Naive thymus-derived CD4-positive, alpha-beta T cell (primary cell): ENCODE measurements at regions of chr4 and their contacts with region 1.

Region 1: GRCh38 chr4:142435599-142436235 is 410.4 kb downstream of the INPP4B start:
- DNase-seq: no peak
- ATAC-seq: no peak
- H3K4me3 ChIP-seq: no peak overlapping the region
- H3K4me3 Mint-ChIP-seq: no peak overlapping the region
- H3K27ac ChIP-seq: no peak overlapping the region
- H3K27ac Mint-ChIP-seq: peak overlapping the region in 2 of 9 donors; percentile 21 to 49
- H3K4me1 ChIP-seq: peaks cover 4 to 8% of the 10 kb centered on the region in 2 donors
- H3K4me1 Mint-ChIP-seq: peaks cover 8 to 43% (median 31%) of the 10 kb centered on the region in 7 donors
- H3K27me3 ChIP-seq: no peaks in the 10 kb centered on the region
- H3K27me3 Mint-ChIP-seq: no peaks in the 10 kb centered on the region

Region 2: GRCh38 chr4:142160509-142160908 is 275.2 kb before region 1 on chr4:
- CTCF ChIA-PET with region 1: no interaction called
- POLR2A ChIA-PET with region 1: no interaction called
- intact Hi-C with region 1: no loop called
- DNase-seq: no peak
- ATAC-seq: no peak
- H3K4me3 ChIP-seq: no peak overlapping the region
- H3K4me3 Mint-ChIP-seq: no peak overlapping the region
- H3K27ac ChIP-seq: no peak overlapping the region
- H3K27ac Mint-ChIP-seq: peak overlapping the region in 5 of 9 donors; percentile 43 to 65 (median 56)
- H3K4me1 ChIP-seq: no peaks in the 10 kb centered on the region
- H3K4me1 Mint-ChIP-seq: peaks cover 2 to 46% (median 21%) of the 10 kb centered on the region in 7 donors
- H3K27me3 ChIP-seq: no peaks in the 10 kb centered on the region
- H3K27me3 Mint-ChIP-seq: no peaks in the 10 kb centered on the region

Region 3: DNA sequence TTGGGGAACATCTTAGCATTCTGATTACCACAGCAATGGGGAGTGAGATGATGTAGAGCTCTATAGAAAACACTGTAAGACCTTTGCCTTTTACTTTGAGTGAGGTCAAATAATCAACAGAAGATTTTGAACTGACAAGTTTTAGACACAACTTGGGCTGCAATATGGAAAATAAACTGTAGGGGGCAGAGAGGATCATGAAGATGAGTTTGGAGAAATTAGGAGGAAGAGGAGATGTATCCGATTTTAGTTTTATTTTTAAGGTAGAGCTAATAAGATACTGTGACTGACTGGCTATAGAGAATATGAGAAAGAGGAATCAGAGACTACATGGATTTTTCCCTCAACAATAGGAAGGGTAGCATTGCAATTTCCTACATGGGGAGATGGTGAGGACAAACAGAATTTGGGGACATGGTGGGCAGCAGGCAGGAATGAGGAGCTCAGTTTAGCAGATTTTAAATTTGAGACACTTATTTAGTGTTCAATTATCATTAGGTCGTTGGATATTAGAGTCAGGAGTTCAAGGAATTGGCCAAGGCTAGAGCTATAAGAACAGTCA is 152.8 kb before region 1 on chr4:
- CTCF ChIA-PET with region 1: interaction called, 4 read pairs
- POLR2A ChIA-PET with region 1: no interaction called
- intact Hi-C with region 1: loop called in 1 of 2 experiments (anchors 2 kb)
- DNase-seq: peak in 7 of 9 donors; percentile 26 to 53 (median 38)
- ATAC-seq: peak; percentile 64
- H3K4me3 ChIP-seq: no peak overlapping the region
- H3K4me3 Mint-ChIP-seq: no peak overlapping the region
- H3K27ac ChIP-seq: no peak overlapping the region
- H3K27ac Mint-ChIP-seq: no peak overlapping the region
- H3K4me1 ChIP-seq: peaks cover 7 to 15% of the 10 kb centered on the region in 2 donors
- H3K4me1 Mint-ChIP-seq: peaks cover 9 to 35% (median 25%) of the 10 kb centered on the region in 7 donors
- H3K27me3 ChIP-seq: no peaks in the 10 kb centered on the region
- H3K27me3 Mint-ChIP-seq: no peaks in the 10 kb centered on the region

Region 4: DNA sequence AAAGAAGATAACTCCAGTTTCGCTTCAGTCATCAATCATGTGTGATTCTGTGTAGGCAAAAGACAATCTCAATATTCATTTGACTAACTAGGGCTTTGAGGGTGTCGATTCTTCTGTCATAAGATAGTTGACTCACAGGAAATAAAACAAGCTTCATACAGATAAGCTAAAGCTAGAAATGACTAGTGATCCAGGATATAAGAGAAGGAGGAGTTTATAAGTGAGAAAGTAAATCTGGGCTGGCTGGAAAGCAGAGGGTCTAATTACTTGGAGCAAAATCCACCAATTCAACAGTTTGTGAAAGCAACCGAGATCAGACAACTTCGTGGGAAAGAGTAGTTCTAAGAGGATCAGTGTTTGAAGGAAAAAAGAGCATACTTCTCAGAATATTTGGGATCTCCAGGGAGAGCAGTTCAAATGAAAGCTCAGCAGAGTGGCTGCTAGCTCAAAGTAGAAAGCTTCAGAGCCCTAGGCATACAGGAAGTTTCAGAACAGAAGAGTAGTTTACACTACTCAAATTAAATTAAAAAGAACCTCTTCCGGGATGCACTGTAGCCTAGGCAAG is 18.9 kb before region 1 on chr4:
- CTCF ChIA-PET with region 1: no interaction called
- POLR2A ChIA-PET with region 1: no interaction called
- intact Hi-C with region 1: loop called in 1 of 2 experiments (anchors 1 kb)
- DNase-seq: peak in 7 of 9 donors; percentile 18 to 64 (median 55)
- ATAC-seq: peak; percentile 90
- H3K4me3 ChIP-seq: peak overlapping the region; percentile 50
- H3K4me3 Mint-ChIP-seq: peak overlapping the region; percentile 22 to 90 (median 79)
- H3K27ac ChIP-seq: peak overlapping the region; percentile 64
- H3K27ac Mint-ChIP-seq: peak overlapping the region; percentile 77 to 98 (median 94)
- H3K4me1 ChIP-seq: peaks cover 25 to 37% of the 10 kb centered on the region in 2 donors
- H3K4me1 Mint-ChIP-seq: peaks cover 21 to 75% (median 60%) of the 10 kb centered on the region in 7 donors
- H3K27me3 ChIP-seq: no peaks in the 10 kb centered on the region
- H3K27me3 Mint-ChIP-seq: no peaks in the 10 kb centered on the region

Region 5: DNA sequence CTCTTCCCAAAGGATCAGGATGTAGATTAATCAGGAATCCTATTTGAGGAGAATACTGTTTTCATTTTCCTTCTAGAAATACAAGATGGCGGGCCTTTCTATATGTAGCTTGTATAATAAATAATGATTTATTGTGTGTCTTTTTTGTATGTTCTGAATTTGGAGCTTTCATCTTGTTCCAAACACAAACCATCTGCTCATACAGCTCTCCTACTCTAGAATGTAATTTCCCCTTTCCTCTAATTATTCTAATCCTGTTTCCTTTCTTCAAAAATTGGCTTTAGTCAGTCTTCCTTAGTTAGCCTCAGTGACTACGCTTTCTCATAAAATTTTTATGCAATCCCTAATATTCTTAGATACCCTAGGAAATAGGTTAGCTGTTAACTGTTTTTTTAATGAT is 11.9 kb before region 1 on chr4:
- CTCF ChIA-PET with region 1: no interaction called
- POLR2A ChIA-PET with region 1: no interaction called
- intact Hi-C with region 1: loop called in 1 of 2 experiments (anchors 1 kb)
- DNase-seq: no peak
- ATAC-seq: no peak
- H3K4me3 ChIP-seq: no peak overlapping the region
- H3K4me3 Mint-ChIP-seq: no peak overlapping the region
- H3K27ac ChIP-seq: no peak overlapping the region
- H3K27ac Mint-ChIP-seq: no peak overlapping the region
- H3K4me1 ChIP-seq: no peaks in the 10 kb centered on the region
- H3K4me1 Mint-ChIP-seq: peaks cover 3 to 20% (median 8%) of the 10 kb centered on the region in 7 donors
- H3K27me3 ChIP-seq: no peaks in the 10 kb centered on the region
- H3K27me3 Mint-ChIP-seq: no peaks in the 10 kb centered on the region

Region 6: DNA sequence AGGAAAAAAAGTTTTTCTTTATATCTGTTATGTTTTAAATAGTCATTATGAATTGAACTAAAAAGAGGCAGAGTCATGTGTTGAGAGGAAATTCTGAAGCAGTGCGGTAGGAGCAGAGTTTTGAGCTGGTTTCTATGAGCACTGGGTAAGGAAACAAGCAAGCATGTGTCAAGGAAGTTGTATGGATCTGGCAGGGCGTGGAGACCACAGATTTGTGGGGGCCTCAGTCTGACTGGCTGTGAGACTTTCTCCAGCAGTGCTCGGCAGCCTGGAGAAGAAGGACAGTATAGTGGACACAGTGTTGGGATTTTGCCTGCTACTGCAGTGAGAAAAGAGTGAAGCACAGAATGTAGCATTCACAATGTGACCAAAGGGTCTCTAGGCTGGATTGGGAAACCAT is 11.3 kb after region 1 on chr4:
- CTCF ChIA-PET with region 1: no interaction called
- POLR2A ChIA-PET with region 1: interaction called, 4 read pairs
- intact Hi-C with region 1: loop called in 1 of 2 experiments (anchors 2 kb)
- DNase-seq: peak in 1 of 9 donors; percentile 2
- ATAC-seq: peak; percentile 20
- H3K4me3 ChIP-seq: no peak overlapping the region
- H3K4me3 Mint-ChIP-seq: peak overlapping the region in 8 of 10 donors; percentile 16 to 78 (median 70)
- H3K27ac ChIP-seq: no peak overlapping the region
- H3K27ac Mint-ChIP-seq: peak overlapping the region in 7 of 9 donors; percentile 32 to 71 (median 56)
- H3K4me1 ChIP-seq: peaks cover 0 to 14% of the 10 kb centered on the region in 2 donors
- H3K4me1 Mint-ChIP-seq: peaks cover 10 to 50% (median 42%) of the 10 kb centered on the region in 7 donors
- H3K27me3 ChIP-seq: no peaks in the 10 kb centered on the region
- H3K27me3 Mint-ChIP-seq: no peaks in the 10 kb centered on the region

Region 7: GRCh38 chr4:142463206-142463605 is 27.5 kb after region 1 on chr4:
- CTCF ChIA-PET with region 1: no interaction called
- POLR2A ChIA-PET with region 1: no interaction called
- intact Hi-C with region 1: no loop called
- DNase-seq: no peak
- ATAC-seq: no peak
- H3K4me3 ChIP-seq: no peak overlapping the region
- H3K4me3 Mint-ChIP-seq: no peak overlapping the region
- H3K27ac ChIP-seq: no peak overlapping the region
- H3K27ac Mint-ChIP-seq: no peak overlapping the region
- H3K4me1 ChIP-seq: no peaks in the 10 kb centered on the region
- H3K4me1 Mint-ChIP-seq: peaks cover 8 to 30% (median 12%) of the 10 kb centered on the region in 7 donors
- H3K27me3 ChIP-seq: no peaks in the 10 kb centered on the region
- H3K27me3 Mint-ChIP-seq: no peaks in the 10 kb centered on the region

Region 8: GRCh38 chr4:142565771-142566170 is 130.1 kb after region 1 on chr4:
- CTCF ChIA-PET with region 1: no interaction called
- POLR2A ChIA-PET with region 1: no interaction called
- intact Hi-C with region 1: no loop called
- DNase-seq: peak in 7 of 9 donors; percentile 53 to 81 (median 76)
- ATAC-seq: peak; percentile 85
- H3K4me3 ChIP-seq: peak overlapping the region; percentile 59
- H3K4me3 Mint-ChIP-seq: peak overlapping the region; percentile 82 to 98 (median 93)
- H3K27ac ChIP-seq: peak overlapping the region; percentile 84
- H3K27ac Mint-ChIP-seq: peak overlapping the region; percentile 92 to 99 (median 96)
- H3K4me1 ChIP-seq: peaks cover 10 to 31% of the 10 kb centered on the region in 2 donors
- H3K4me1 Mint-ChIP-seq: peaks cover 1 to 77% (median 60%) of the 10 kb centered on the region in 7 donors
- H3K27me3 ChIP-seq: no peaks in the 10 kb centered on the region
- H3K27me3 Mint-ChIP-seq: no peaks in the 10 kb centered on the region

Region 9: GRCh38 chr4:142719854-142720541 is 284.3 kb after region 1 on chr4:
- CTCF ChIA-PET with region 1: no interaction called
- POLR2A ChIA-PET with region 1: no interaction called
- intact Hi-C with region 1: loop called in 1 of 2 experiments (anchors 5 kb)
- DNase-seq: peak in 6 of 9 donors; percentile 22 to 64 (median 58)
- ATAC-seq: peak; percentile 75
- H3K4me3 ChIP-seq: no peak overlapping the region
- H3K4me3 Mint-ChIP-seq: peak overlapping the region in 6 of 10 donors; percentile 16 to 51 (median 37)
- H3K27ac ChIP-seq: peak overlapping the region; percentile 43
- H3K27ac Mint-ChIP-seq: peak overlapping the region in 6 of 9 donors; percentile 43 to 91 (median 68)
- H3K4me1 ChIP-seq: peaks cover 0 to 10% of the 10 kb centered on the region in 2 donors
- H3K4me1 Mint-ChIP-seq: peaks cover 3 to 49% (median 30%) of the 10 kb centered on the region in 7 donors
- H3K27me3 ChIP-seq: no peaks in the 10 kb centered on the region
- H3K27me3 Mint-ChIP-seq: no peaks in the 10 kb centered on the region

Region 10: DNA sequence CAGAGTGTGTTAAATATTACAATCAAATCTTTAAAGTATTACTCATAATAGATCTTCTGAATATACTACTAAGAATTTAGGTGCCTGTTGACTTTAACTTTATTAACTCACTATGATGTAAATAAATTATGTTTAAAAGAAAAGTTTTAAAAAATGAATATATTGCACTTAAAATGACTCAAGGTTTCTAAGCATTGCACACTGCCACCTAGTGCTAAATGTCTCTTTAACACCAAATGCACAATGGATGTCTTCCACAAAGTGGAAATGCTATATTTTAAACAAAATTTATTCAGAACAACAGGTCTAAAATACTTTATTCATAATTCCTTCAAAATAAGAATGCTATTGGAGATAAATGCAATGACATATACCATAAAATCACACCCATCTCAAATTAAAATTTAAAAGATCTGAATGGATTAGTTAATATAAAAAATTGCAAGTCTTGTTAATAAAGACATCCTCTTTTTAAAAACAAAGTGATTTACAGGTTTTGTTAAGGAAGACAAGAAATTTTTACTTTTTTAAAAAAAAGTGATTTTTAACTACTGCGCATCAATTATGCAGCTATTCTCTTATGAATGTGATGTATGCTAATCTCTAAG is 404.9 kb after region 1 on chr4:
- CTCF ChIA-PET with region 1: no interaction called
- POLR2A ChIA-PET with region 1: no interaction called
- intact Hi-C with region 1: loop called in 1 of 2 experiments (anchors 5 kb)
- DNase-seq: peak in 5 of 9 donors; percentile 20 to 46 (median 35)
- ATAC-seq: peak; percentile 37
- H3K4me3 ChIP-seq: no peak overlapping the region
- H3K4me3 Mint-ChIP-seq: no peak overlapping the region
- H3K27ac ChIP-seq: no peak overlapping the region
- H3K27ac Mint-ChIP-seq: no peak overlapping the region
- H3K4me1 ChIP-seq: peaks cover 0 to 5% of the 10 kb centered on the region in 2 donors
- H3K4me1 Mint-ChIP-seq: peaks cover 6 to 27% (median 18%) of the 10 kb centered on the region in 7 donors
- H3K27me3 ChIP-seq: no peaks in the 10 kb centered on the region
- H3K27me3 Mint-ChIP-seq: peaks cover 0 to 8% (median 0%) of the 10 kb centered on the region in 5 donors